ENCODE measurements at regions of chr4 and their contacts with region 1.

Region 1: GRCh38 chr4:75995727-75996126 is 5.0 kb upstream of the SDAD1 start:
- DNase-seq: peak; percentile 40
- H3K4me3 ChIP-seq: no peak overlapping the region
- H3K27ac ChIP-seq: no peak overlapping the region
- H3K4me1 ChIP-seq: no peaks in the 10 kb centered on the region
- H3K27me3 ChIP-seq: peaks cover 7 to 8% of the 10 kb centered on the region in 2 experiments
- CTCF ChIP-seq: peak; percentile 28 to 46
- POLR2A ChIP-seq: no peak

Region 2: GRCh38 chr4:75028196-75028854 is 967.4 kb before region 1 on chr4:
- CTCF ChIA-PET with region 1: no interaction called
- POLR2A ChIA-PET with region 1: no interaction called
- dilution Hi-C with region 1: no loop called
- intact Hi-C with region 1: no loop called
- DNase-seq: no peak
- H3K4me3 ChIP-seq: no peak overlapping the region
- H3K27ac ChIP-seq: no peak overlapping the region
- H3K4me1 ChIP-seq: no peaks in the 10 kb centered on the region
- H3K27me3 ChIP-seq: no peaks in the 10 kb centered on the region
- CTCF ChIP-seq: no peak
- POLR2A ChIP-seq: no peak

Region 3: GRCh38 chr4:75963558-75963957 is 32.2 kb before region 1 on chr4:
- CTCF ChIA-PET with region 1: no interaction called
- POLR2A ChIA-PET with region 1: no interaction called
- dilution Hi-C with region 1: no loop called
- intact Hi-C with region 1: no loop called
- DNase-seq: no peak
- H3K4me3 ChIP-seq: no peak overlapping the region
- H3K27ac ChIP-seq: no peak overlapping the region
- H3K4me1 ChIP-seq: no peaks in the 10 kb centered on the region
- H3K27me3 ChIP-seq: no peaks in the 10 kb centered on the region
- CTCF ChIP-seq: no peak
- POLR2A ChIP-seq: no peak

Region 4: DNA sequence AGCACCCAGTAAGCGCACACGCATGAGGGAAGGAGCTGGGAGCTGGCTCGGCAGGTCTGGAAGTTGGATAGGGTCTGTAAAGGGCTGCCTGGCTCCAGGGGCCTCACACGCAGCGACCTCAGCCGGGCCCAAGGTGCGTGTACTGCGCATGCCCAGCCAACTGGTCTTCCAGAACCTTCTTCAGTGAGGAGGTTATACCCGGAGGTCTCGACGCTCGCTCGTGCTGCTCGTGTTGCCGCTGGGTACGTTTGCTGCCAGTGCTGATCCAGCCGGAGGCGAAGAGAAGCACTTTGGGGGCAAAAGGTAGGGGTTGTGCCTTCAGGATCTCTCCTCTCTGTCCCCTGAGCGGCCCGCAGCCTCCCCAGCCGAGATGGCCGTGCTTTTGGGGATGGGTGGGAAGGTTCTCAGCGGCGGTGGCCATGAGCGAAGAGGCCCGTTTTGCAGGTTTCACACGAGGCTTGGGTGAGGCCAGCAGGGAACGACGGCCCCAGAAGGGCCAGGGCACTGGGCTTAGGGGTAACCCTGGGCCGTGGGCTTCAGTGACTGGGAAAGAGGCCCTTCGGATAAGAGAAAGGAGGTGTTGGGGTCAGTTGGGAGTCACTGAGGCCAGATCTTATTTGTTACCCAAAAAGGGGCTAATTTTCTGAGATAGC is 15.4 kb after region 1 on chr4:
- CTCF ChIA-PET with region 1: interaction called, 13 read pairs
- POLR2A ChIA-PET with region 1: no interaction called
- dilution Hi-C with region 1: no loop called
- intact Hi-C with region 1: no loop called
- DNase-seq: no peak
- H3K4me3 ChIP-seq: no peak overlapping the region
- H3K27ac ChIP-seq: no peak overlapping the region
- H3K4me1 ChIP-seq: peaks cover 5% of the 10 kb centered on the region
- H3K27me3 ChIP-seq: peaks cover 0 to 3% of the 10 kb centered on the region in 2 experiments
- CTCF ChIP-seq: no peak
- POLR2A ChIP-seq: no peak

Region 5: DNA sequence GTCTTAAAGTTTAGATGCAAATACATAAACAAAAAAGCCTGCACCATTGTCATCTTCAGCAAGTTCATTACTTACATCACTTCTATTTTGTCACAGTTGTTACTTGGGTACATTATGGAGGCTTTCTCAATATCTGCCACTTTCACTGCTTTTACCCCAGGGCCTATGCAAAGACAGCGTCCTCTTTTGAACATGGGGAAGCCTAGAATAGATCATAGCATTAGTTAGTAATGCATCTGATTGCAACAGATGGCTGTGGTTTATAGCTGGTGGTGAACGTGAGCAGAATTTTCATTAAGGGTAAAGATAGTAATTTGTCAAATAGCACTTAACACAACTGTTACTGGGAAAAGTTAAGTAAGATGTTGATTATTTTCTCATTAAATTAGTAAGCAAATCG is 39.4 kb after region 1 on chr4:
- CTCF ChIA-PET with region 1: interaction called, 33 read pairs
- POLR2A ChIA-PET with region 1: interaction called, 3 read pairs
- dilution Hi-C with region 1: no loop called
- intact Hi-C with region 1: no loop called
- DNase-seq: no peak
- H3K4me3 ChIP-seq: no peak overlapping the region
- H3K27ac ChIP-seq: no peak overlapping the region
- H3K4me1 ChIP-seq: peaks cover 11% of the 10 kb centered on the region
- H3K27me3 ChIP-seq: no peaks in the 10 kb centered on the region
- CTCF ChIP-seq: no peak
- POLR2A ChIP-seq: no peak

Region 6: GRCh38 chr4:76061982-76062381 is 66.3 kb after region 1 on chr4:
- CTCF ChIA-PET with region 1: interaction called, 127 read pairs
- POLR2A ChIA-PET with region 1: no interaction called
- dilution Hi-C with region 1: no loop called
- intact Hi-C with region 1: loop called (anchors 1 kb)
- DNase-seq: no peak
- H3K4me3 ChIP-seq: no peak overlapping the region
- H3K27ac ChIP-seq: no peak overlapping the region
- H3K4me1 ChIP-seq: no peaks in the 10 kb centered on the region
- H3K27me3 ChIP-seq: peaks cover 21 to 46% of the 10 kb centered on the region in 2 experiments
- CTCF ChIP-seq: no peak
- POLR2A ChIP-seq: no peak

Region 7: GRCh38 chr4:76074468-76074867 is 78.7 kb after region 1 on chr4 and contains the start of gene ART3:
- CTCF ChIA-PET with region 1: interaction called, 127 read pairs
- POLR2A ChIA-PET with region 1: no interaction called
- dilution Hi-C with region 1: no loop called
- intact Hi-C with region 1: no loop called
- DNase-seq: no peak
- H3K4me3 ChIP-seq: no peak within 1 kb of the TSS
- H3K27ac ChIP-seq: no peak within 1 kb of the TSS
- H3K4me1 ChIP-seq: no peaks in the 10 kb centered on the region
- H3K27me3 ChIP-seq: peaks cover 3% of the 10 kb centered on the region in 2 experiments
- CTCF ChIP-seq: no peak
- POLR2A ChIP-seq: no peak
- total RNA-seq, gene ART3: not detected in 2 replicates

Region 8: GRCh38 chr4:76377911-76378310 is 382.2 kb after region 1 on chr4:
- CTCF ChIA-PET with region 1: interaction called, 19 read pairs
- POLR2A ChIA-PET with region 1: no interaction called
- dilution Hi-C with region 1: no loop called
- intact Hi-C with region 1: no loop called
- DNase-seq: peak; percentile 38
- H3K4me3 ChIP-seq: no peak overlapping the region
- H3K27ac ChIP-seq: no peak overlapping the region
- H3K4me1 ChIP-seq: peaks cover 20% of the 10 kb centered on the region
- H3K27me3 ChIP-seq: peaks cover 0 to 2% of the 10 kb centered on the region in 2 experiments
- CTCF ChIP-seq: peak; percentile 53 to 71
- POLR2A ChIP-seq: no peak